ENCODE measurements at regions of chr2 and their contacts with region 1.

Region 1: GRCh38 chr2:226984750-226985582 is 149.1 kb downstream of the RHBDD1 start:
- DNase-seq: no peak
- ATAC-seq: peak; percentile 92
- H3K4me3 Mint-ChIP-seq: no peak overlapping the region
- H3K27ac Mint-ChIP-seq: peak overlapping the region; percentile 80
- H3K4me1 Mint-ChIP-seq: peaks cover 24% of the 10 kb centered on the region
- H3K27me3 Mint-ChIP-seq: no peaks in the 10 kb centered on the region
- CTCF ChIP-seq: peak; percentile 28

Region 2: GRCh38 chr2:225282858-225283710 is 1701.9 kb before region 1 on chr2:
- CTCF ChIA-PET with region 1: no interaction called
- POLR2A ChIA-PET with region 1: no interaction called
- intact Hi-C with region 1: loop called (anchors 2 kb)
- DNase-seq: no peak
- ATAC-seq: peak; percentile 61
- H3K4me3 Mint-ChIP-seq: no peak overlapping the region
- H3K27ac Mint-ChIP-seq: no peak overlapping the region
- H3K4me1 Mint-ChIP-seq: no peaks in the 10 kb centered on the region
- H3K27me3 Mint-ChIP-seq: no peaks in the 10 kb centered on the region
- CTCF ChIP-seq: no peak

Region 3: GRCh38 chr2:225889446-225889850 is 1095.5 kb before region 1 on chr2:
- CTCF ChIA-PET with region 1: interaction called, 11 read pairs
- POLR2A ChIA-PET with region 1: no interaction called
- intact Hi-C with region 1: loop called (anchors 1 kb)
- DNase-seq: no peak
- ATAC-seq: peak; percentile 47
- H3K4me3 Mint-ChIP-seq: no peak overlapping the region
- H3K27ac Mint-ChIP-seq: no peak overlapping the region
- H3K4me1 Mint-ChIP-seq: no peaks in the 10 kb centered on the region
- H3K27me3 Mint-ChIP-seq: peaks cover 4% of the 10 kb centered on the region
- CTCF ChIP-seq: no peak

Region 4: DNA sequence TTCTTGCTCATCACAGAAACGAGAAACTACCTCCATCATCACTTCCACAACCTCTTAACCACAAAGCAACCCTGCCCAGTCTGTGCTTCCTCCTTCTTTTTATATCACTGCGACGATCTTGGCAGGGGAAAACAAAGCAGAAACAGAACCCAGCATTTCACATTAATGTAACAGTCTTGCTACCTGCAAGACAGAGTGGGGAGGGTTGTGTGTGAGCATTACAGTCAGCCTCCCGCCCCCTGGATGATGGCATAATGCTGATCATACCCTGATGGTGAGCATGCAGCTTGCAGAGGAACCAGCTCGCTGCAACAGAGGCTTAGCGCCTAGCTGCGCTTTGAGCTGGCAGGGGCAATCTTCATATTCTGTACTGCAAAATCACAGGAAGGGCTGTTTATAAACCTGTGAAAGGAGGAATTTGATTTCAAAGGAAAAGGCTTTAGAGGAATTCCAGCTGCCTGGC is 561.4 kb before region 1 on chr2:
- CTCF ChIA-PET with region 1: no interaction called
- POLR2A ChIA-PET with region 1: no interaction called
- intact Hi-C with region 1: loop called (anchors 10 kb)
- DNase-seq: peak; percentile 28
- ATAC-seq: peak; percentile 85
- H3K4me3 Mint-ChIP-seq: peak overlapping the region; percentile 72
- H3K27ac Mint-ChIP-seq: peak overlapping the region; percentile 13
- H3K4me1 Mint-ChIP-seq: peaks cover 37% of the 10 kb centered on the region
- H3K27me3 Mint-ChIP-seq: no peaks in the 10 kb centered on the region
- CTCF ChIP-seq: no peak

Region 5: GRCh38 chr2:226791487-226792081 is 193.4 kb before region 1 on chr2:
- CTCF ChIA-PET with region 1: no interaction called
- POLR2A ChIA-PET with region 1: interaction called, 5 read pairs
- intact Hi-C with region 1: loop called (anchors 1 kb)
- DNase-seq: peak; percentile 93
- ATAC-seq: peak; percentile 98
- H3K4me3 Mint-ChIP-seq: peak overlapping the region; percentile 93
- H3K27ac Mint-ChIP-seq: peak overlapping the region; percentile 99
- H3K4me1 Mint-ChIP-seq: peaks cover 34% of the 10 kb centered on the region
- H3K27me3 Mint-ChIP-seq: no peaks in the 10 kb centered on the region
- CTCF ChIP-seq: no peak

Region 6: DNA sequence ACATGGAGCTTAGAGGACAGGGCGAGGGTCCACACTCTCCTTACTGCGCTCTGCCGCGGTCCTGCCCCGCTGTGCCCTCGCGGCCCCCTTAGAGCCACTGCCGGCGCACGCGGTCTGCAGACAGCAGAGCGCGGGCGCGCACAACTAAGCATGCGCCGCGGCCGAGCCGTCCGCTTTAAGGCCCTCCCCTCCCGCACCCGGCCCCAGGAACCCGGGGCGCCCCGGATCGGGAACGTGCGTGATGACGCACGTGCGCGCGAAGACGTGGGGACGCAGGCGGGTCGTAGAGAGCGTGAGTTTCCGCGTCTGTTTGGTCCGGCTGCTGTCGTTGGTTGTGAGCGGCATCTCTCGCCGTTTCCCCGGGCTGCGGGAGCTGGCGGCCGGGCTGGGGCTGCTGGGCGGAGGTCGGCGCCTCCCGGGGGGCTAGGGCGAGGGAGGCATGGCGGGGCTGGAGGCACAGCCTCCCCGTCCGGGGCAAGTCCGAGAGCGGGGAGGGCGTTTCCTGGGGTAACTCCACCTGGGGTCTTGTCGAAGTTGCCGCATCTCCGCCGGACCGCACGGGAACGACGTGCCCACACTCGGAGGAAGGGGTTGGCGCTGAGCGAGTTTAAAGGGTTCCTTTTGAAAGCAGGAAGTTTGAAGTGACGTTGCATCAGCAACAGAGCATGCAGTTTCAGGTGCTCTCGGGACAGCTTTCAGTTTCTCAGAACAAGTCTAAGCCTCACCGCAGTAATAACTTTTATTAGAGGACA is 149.0 kb before region 1 on chr2 and contains the start of gene RHBDD1:
- CTCF ChIA-PET with region 1: interaction called, 5 read pairs
- POLR2A ChIA-PET with region 1: interaction called, 16 read pairs
- intact Hi-C with region 1: loop called (anchors 1 kb)
- DNase-seq: peak; percentile 93
- ATAC-seq: peak; percentile 86
- H3K4me3 Mint-ChIP-seq: peak within 1 kb of the TSS; percentile 90
- H3K27ac Mint-ChIP-seq: peak within 1 kb of the TSS; percentile 97
- H3K4me1 Mint-ChIP-seq: peaks cover 69% of the 10 kb centered on the region
- H3K27me3 Mint-ChIP-seq: no peaks in the 10 kb centered on the region
- CTCF ChIP-seq: no peak
- total RNA-seq, gene RHBDD1: 71.1 and 90.2 TPM in 2 replicates